Right ventricle myocardium inferior (tissue), 1 donor: ENCODE measurements at regions of chr11 and their contacts with region 1.

Region 1: GRCh38 chr11:85854557-85855340 is 434 bp upstream of the CCDC83 start:
- DNase-seq: peak; percentile 97
- ATAC-seq: peak; percentile 98

Region 2: DNA sequence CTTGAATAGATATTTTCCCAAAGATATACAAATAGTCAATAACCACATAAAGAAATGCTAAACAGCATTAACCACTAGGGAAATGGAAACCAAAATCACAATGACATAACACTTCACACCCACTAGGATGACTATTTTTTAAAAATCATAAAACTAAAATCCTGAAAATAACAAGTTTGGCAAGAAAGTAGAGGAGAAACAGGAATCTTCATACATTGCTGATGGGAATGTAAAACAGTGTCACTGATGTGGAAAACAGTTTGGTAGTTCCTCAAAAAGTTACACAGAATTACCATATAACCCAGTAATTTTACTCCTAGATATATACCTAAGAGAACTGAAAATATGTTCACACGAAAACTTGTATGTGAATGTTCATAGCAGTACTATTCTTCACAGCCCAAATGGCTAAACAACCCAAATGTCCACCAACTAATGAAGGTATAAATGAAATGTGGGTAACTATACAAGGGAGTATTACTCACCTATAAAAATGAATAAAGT is 201.7 kb after region 1 on chr11:
- intact Hi-C with region 1: loop called (anchors 10 kb)
- DNase-seq: no peak
- ATAC-seq: no peak

Region 3: DNA sequence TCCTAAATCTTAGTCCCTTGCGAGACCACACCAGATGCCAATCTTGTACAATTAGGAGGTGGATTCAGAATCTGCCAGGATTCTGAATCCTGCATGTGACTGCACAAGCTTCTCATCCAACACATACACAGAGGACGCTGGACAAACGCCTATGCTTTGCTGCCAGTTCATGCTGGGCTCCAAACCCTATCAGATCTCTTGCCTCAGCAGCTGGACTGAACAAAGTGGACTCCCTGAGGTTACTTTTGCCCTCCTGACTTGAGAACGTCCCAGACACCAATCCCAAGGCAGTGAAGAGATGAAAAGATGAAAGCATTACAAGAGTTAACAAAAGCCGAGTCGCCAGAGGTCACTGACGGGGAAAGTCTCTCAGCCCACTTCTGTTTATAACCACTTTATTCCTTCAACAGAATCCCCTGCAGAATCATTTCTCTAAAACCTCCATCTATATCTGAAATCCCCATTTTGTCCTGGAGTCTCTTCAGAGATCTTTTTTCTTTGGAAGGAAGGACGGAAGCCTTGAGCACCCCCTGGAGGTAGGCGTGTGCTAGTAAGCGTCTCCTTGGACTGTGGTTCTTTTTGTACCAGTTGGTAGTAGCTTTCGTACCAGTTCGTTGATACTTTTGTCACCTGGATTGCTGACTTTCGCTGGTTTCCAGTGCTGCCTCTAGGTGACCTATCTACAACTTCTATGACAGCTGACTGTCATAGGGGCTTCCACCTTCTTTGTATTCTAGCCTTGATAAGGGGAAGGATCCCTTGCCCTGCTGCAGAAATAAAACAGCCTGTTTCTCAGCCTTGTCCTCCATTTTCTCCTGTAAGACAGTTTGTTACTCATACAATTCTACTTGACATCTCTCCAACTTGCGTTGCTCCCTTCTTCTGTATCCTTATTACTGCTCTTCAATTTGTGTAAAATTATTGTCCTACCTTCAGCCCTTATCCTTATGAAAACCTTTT is 363.7 kb after region 1 on chr11:
- intact Hi-C with region 1: loop called (anchors 2 kb)
- DNase-seq: no peak
- ATAC-seq: peak; percentile 91

Region 4: DNA sequence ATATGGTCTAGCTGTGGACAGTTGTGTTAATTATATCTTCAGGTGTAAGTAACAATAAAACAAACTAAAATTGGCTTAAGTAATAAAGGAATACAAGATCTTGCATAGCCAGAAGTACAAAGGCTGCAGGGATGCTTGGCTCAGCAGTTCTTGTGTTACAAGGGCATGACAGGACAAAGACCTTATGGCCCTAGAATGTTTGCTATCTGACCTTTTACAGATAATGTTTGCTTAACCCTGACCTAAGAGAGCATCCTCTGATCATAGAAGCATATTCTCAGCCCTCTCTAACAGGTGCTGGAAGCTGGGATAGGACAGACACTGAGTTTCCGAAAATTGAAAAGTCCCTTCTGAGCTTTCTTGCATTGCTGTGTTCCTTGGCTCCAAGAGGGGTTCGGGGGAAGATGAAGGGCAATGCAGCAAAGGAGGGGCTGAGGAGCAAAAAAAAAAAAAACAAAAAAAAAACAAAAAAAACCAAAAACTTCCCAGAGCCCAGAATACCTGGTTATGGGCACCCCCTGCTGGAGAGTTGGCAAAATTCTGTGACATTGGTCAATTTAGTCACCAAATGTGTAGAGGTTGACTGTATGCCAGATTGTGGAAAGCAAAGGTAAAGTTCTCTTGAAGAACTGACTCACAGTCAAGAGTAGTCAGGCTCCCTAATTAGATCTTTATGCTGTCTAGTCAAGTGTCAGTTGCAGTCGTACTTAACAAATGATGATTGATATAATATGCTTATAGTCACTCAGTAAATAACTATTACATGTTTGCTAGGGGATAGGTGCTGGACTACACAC is 436.9 kb after region 1 on chr11:
- intact Hi-C with region 1: loop called (anchors 5 kb)
- DNase-seq: no peak
- ATAC-seq: no peak

Region 5: GRCh38 chr11:86818466-86819192 is 963.9 kb after region 1 on chr11:
- intact Hi-C with region 1: loop called (anchors 10 kb)
- DNase-seq: no peak
- ATAC-seq: no peak